CD4-positive, alpha-beta T cell (primary cell): ENCODE measurements at regions of chr3 and their contacts with region 1.

Region 1: GRCh38 chr3:128051837-128052594 is at the start of gene SEC61A1:
- DNase-seq: peak; percentile 91 to 97 (median 94)
- ATAC-seq: peak; percentile 93
- H3K4me3 ChIP-seq: peak within 1 kb of the TSS; percentile 95
- H3K4me3 Mint-ChIP-seq: peak within 1 kb of the TSS; percentile 99
- H3K27ac ChIP-seq: peak within 1 kb of the TSS; percentile 72 to 73
- H3K27ac Mint-ChIP-seq: peak within 1 kb of the TSS; percentile 88
- H3K4me1 ChIP-seq: peaks cover 37% of the 10 kb centered on the region
- H3K4me1 Mint-ChIP-seq: peaks cover 47% of the 10 kb centered on the region
- H3K27me3 ChIP-seq: no peaks in the 10 kb centered on the region
- H3K27me3 Mint-ChIP-seq: no peaks in the 10 kb centered on the region
- CTCF ChIP-seq: no peak
- total RNA-seq, gene SEC61A1: 127 to 139 TPM

Region 2: DNA sequence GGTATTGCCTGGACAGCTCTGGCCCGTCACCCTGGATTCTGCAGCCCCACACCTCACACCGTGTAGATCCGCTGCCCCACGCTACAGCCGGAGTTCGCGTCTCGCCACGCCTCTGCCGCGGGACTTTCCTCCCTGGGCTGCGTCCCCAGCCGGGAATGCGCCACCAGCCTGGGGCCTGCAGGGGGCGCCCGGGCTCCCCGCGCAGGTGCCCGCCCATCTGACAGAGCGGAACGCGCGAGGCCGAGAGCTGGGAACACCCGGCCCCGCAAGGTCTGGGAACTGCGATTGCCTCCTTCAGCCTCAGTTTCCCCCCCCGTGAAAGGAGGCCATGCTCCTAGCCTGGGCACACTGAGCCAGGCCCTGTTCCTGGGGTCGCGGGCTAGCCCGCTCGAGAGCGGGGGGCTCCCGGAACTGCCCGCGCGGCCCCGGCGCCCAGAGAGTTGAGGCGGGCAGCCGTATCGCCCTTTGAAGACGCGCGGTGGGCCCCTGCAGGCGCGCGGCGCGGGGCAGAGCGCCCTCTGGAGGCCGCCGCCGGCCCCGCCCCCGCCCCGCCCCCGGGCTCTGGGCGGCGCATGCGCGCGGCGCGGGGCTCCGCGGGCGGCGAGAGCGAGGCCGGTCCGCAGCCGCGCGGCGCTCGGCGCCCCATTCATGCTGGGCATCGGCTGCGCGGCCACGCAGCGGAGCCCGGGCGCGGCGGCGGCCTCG is 1069.4 kb before region 1 on chr3 and contains the start of gene PLXNA1:
- CTCF ChIA-PET with region 1: no interaction called
- POLR2A ChIA-PET with region 1: no interaction called
- intact Hi-C with region 1: loop called in 1 of 2 experiments (anchors 5 kb)
- DNase-seq: peak; percentile 76 to 95 (median 85)
- ATAC-seq: peak; percentile 82
- H3K4me3 ChIP-seq: peak within 1 kb of the TSS; percentile 67
- H3K4me3 Mint-ChIP-seq: peak within 1 kb of the TSS; percentile 89
- H3K27ac ChIP-seq: peak within 1 kb of the TSS; percentile 88 to 90
- H3K27ac Mint-ChIP-seq: peak within 1 kb of the TSS; percentile 93
- H3K4me1 ChIP-seq: peaks cover 30% of the 10 kb centered on the region
- H3K4me1 Mint-ChIP-seq: peaks cover 15% of the 10 kb centered on the region
- H3K27me3 ChIP-seq: peaks cover 0 to 5% of the 10 kb centered on the region in 2 experiments
- H3K27me3 Mint-ChIP-seq: peaks cover 10% of the 10 kb centered on the region
- CTCF ChIP-seq: peak; percentile 99
- total RNA-seq, gene PLXNA1: 9.8 to 10.6 TPM

Region 3: DNA sequence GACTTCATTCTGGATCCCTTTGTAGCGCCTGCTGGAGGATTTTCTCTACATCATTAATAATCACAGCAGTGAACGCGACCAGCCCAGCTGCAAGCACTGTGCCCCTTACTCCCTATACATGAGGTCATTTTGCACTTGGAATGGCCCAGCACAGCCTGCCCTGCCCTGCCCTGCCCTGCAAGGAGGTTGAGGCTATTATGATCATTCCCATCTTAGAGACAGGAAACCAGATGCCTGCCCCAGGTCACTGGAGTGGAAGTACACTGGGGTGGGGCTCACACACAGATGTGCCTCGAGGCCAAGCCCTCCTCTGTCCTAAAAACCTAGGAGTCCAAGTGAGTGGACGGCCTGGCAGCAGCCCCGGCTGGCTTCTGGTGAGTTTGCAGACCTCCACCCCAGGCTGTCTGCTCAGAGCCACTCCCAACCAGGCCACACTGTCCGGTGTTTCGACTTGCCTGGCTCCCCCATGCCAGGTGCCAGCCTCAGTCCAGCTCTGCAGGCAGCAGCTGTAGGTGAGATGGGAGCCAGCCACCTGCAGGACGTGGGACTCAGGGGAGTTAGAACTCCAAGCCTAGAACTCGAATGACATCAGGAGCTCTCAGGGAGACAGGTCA is 30.1 kb before region 1 on chr3:
- CTCF ChIA-PET with region 1: no interaction called
- POLR2A ChIA-PET with region 1: no interaction called
- intact Hi-C with region 1: no loop called
- DNase-seq: no peak
- ATAC-seq: no peak
- H3K4me3 ChIP-seq: no peak overlapping the region
- H3K4me3 Mint-ChIP-seq: no peak overlapping the region
- H3K27ac ChIP-seq: no peak overlapping the region
- H3K27ac Mint-ChIP-seq: no peak overlapping the region
- H3K4me1 ChIP-seq: no peaks in the 10 kb centered on the region
- H3K4me1 Mint-ChIP-seq: no peaks in the 10 kb centered on the region
- H3K27me3 ChIP-seq: peaks cover 0 to 3% of the 10 kb centered on the region in 2 experiments
- H3K27me3 Mint-ChIP-seq: peaks cover 17% of the 10 kb centered on the region
- CTCF ChIP-seq: no peak

Region 4: DNA sequence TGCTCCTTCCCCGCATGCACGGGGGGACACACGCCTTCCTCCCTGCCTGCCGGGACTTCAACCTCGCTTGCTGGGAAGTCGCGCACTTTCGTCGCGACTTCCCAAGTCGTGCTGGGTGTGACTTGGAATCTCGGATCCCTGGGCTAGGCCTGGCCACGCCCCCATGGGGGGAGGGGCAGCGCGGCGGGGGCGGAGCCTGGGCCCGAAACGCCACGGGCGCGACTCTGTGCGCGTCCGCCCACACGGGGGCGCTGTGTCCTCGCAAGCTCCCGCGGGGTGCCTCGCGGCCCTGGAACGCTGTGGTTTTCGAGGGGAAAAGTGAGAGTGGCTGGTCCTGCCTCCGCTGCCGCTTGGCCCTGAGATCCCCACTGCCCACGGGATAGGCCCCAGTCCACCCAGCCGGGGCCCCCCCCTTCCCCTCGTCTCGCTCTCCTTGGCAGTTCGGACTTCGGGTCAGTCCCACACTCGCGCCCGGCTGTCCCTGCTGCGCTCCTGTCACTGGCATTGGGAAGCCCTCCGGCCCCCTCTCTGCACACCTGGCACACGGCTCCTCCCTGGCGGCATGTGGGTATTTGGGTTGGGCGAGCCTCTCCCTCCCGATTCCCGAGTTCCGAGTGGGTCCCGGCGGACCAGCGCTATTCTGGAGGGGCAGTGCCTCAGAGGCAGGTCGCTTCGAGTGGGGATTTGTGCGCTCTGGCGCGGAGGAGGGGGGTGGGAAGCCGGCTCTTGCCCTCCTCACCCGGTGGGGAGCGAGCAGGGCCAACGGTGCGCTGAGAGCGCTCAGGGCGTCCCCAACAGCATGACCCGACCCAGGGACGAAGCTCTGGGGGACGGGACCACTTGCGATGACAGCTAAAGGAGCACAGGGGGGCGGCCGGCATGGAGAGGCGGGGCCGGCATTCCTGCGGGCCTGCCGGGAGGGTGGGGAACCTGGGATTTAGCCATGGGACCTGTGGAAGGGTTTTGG is 23.8 kb after region 1 on chr3:
- CTCF ChIA-PET with region 1: interaction called, 12 read pairs
- POLR2A ChIA-PET with region 1: interaction called, 6 read pairs
- intact Hi-C with region 1: loop called (anchors 1 to 2 kb)
- DNase-seq: peak; percentile 74 to 93 (median 83)
- ATAC-seq: peak; percentile 89
- H3K4me3 ChIP-seq: peak overlapping the region; percentile 66
- H3K4me3 Mint-ChIP-seq: peak overlapping the region; percentile 77
- H3K27ac ChIP-seq: no peak overlapping the region
- H3K27ac Mint-ChIP-seq: no peak overlapping the region
- H3K4me1 ChIP-seq: peaks cover 23% of the 10 kb centered on the region
- H3K4me1 Mint-ChIP-seq: peaks cover 5% of the 10 kb centered on the region
- H3K27me3 ChIP-seq: peaks cover 8 to 10% of the 10 kb centered on the region in 2 experiments
- H3K27me3 Mint-ChIP-seq: no peaks in the 10 kb centered on the region
- CTCF ChIP-seq: peak; percentile 87

Region 5: DNA sequence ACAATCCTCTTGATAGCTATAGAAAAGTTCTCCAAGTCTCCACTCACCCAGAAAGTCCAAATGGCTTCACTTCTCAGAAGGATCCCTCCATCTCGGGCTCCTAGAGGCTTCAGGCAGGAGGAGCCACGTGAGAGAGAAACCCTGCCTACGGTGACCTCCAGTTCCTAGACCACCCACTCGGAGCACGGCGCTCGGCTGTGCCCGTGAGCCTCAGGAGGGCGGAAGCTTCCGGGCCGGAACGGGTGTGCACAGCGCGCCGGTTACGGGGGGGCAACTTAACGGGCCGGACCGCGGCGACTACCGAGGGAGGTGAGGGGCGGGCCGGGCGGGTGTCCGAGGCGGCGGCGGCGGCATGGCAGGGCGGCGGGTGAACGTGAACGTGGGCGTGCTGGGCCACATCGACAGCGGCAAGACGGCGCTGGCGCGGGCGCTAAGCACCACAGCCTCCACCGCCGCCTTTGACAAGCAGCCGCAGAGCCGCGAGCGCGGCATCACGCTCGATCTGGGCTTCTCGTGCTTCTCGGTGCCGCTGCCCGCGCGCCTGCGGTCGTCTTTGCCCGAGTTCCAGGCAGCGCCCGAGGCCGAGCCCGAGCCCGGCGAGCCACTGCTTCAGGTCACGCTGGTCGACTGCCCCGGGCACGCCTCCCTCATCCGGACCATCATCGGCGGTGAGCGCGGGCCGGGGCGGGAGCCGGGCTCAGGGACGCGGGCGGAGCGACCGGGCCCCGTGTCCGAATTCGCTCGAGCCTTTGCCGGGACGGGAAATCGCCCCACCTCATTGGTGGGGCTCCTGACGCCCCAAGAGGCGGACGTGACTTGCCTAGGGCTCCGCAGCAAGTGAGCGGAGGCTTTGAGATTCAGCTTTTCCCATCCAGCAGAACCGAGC is 101.4 kb after region 1 on chr3 and contains the start of gene EEFSEC:
- CTCF ChIA-PET with region 1: no interaction called
- POLR2A ChIA-PET with region 1: interaction called, 3 read pairs
- intact Hi-C with region 1: loop called in 1 of 2 experiments (anchors 5 kb)
- DNase-seq: peak; percentile 72 to 90 (median 82)
- ATAC-seq: peak; percentile 87
- H3K4me3 ChIP-seq: peak within 1 kb of the TSS; percentile 58
- H3K4me3 Mint-ChIP-seq: peak within 1 kb of the TSS; percentile 87
- H3K27ac ChIP-seq: peak within 1 kb of the TSS; percentile 56 to 80
- H3K27ac Mint-ChIP-seq: peak within 1 kb of the TSS; percentile 84
- H3K4me1 ChIP-seq: peaks cover 22% of the 10 kb centered on the region
- H3K4me1 Mint-ChIP-seq: peaks cover 40% of the 10 kb centered on the region
- H3K27me3 ChIP-seq: no peaks in the 10 kb centered on the region
- H3K27me3 Mint-ChIP-seq: no peaks in the 10 kb centered on the region
- CTCF ChIP-seq: no peak
- total RNA-seq, gene EEFSEC: 13.1 to 13.9 TPM